HCT116 (cell line): ENCODE measurements at regions of chr20 and their contacts with region 1.

Region 1: GRCh38 chr20:24992487-24993205 is at the start of gene APMAP:
- DNase-seq: peak; percentile 77
- ATAC-seq: peak; percentile 91
- H3K4me3 ChIP-seq: peak within 1 kb of the TSS; percentile 89 to 94
- H3K27ac ChIP-seq: peak within 1 kb of the TSS; percentile 71
- H3K4me1 ChIP-seq: peaks cover 12 to 28% of the 10 kb centered on the region in 2 experiments
- H3K27me3 ChIP-seq: peaks cover 1% of the 10 kb centered on the region; the same call in 1 of the 2 replicates
- CTCF ChIP-seq: no peak
- POLR2A ChIP-seq: peak; percentile 86
- RAD21 ChIP-seq: no peak
- total RNA-seq, gene APMAP: 82.7 TPM

Region 2: DNA sequence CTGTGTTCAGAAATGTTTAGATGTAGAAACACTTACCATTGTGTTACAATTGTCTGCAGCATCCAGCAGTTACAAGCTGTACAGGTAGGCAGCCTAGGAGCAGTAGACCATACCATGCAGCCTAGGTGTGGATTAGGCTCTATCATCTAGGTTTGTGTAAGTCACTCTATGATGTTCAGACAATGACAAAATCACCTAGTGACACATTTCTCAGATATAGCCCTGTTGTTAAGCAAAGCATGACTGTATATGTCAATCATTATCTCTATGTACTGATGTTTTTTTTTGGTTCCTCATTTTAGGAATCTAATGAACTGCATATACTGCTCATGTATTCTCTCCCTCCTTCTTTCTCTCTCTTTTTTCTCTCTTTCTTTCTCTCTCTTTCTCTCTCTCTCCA is 1479.5 kb before region 1 on chr20:
- CTCF ChIA-PET with region 1: no interaction called
- POLR2A ChIA-PET with region 1: no interaction called
- RAD21 ChIA-PET with region 1: no interaction called
- intact Hi-C with region 1: no loop called
- DNase-seq: no peak
- ATAC-seq: no peak
- H3K4me3 ChIP-seq: no peak overlapping the region
- H3K27ac ChIP-seq: no peak overlapping the region
- H3K4me1 ChIP-seq: no peaks in the 10 kb centered on the region
- H3K27me3 ChIP-seq: no peaks in the 10 kb centered on the region
- CTCF ChIP-seq: no peak
- POLR2A ChIP-seq: no peak
- RAD21 ChIP-seq: no peak

Region 3: DNA sequence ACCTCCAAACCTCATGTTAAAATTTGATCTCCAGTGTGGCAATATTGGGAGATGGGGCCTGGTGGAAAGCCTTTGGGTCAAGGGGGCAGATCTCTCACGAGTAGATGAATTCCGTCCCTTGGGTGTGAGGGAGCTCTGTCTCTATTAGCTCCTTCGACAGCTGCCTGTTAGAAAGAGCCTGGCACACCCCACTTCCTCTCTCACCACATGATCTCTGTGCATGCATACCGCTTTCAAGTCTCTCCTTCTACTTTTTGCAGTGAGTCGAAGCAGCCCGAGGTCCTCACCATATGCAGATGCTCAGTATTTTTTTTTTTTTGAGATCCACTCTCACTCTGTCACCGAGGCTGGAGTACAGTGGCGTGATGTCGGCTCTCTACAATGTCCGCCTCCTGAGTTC is 346.3 kb before region 1 on chr20:
- CTCF ChIA-PET with region 1: no interaction called
- POLR2A ChIA-PET with region 1: no interaction called
- RAD21 ChIA-PET with region 1: no interaction called
- intact Hi-C with region 1: no loop called
- DNase-seq: no peak
- ATAC-seq: no peak
- H3K4me3 ChIP-seq: no peak overlapping the region
- H3K27ac ChIP-seq: no peak overlapping the region
- H3K4me1 ChIP-seq: peaks cover 0 to 5% of the 10 kb centered on the region in 2 experiments; a peak in 2 of 4 replicates
- H3K27me3 ChIP-seq: peaks cover 27% of the 10 kb centered on the region; the same call in 1 of the 2 replicates
- CTCF ChIP-seq: no peak
- POLR2A ChIP-seq: no peak
- RAD21 ChIP-seq: no peak

Region 4: GRCh38 chr20:25032478-25033280 is 40.0 kb after region 1 on chr20:
- CTCF ChIA-PET with region 1: no interaction called
- POLR2A ChIA-PET with region 1: no interaction called
- RAD21 ChIA-PET with region 1: no interaction called
- intact Hi-C with region 1: no loop called
- DNase-seq: no peak
- ATAC-seq: no peak
- H3K4me3 ChIP-seq: no peak overlapping the region
- H3K27ac ChIP-seq: no peak overlapping the region
- H3K4me1 ChIP-seq: no peaks in the 10 kb centered on the region
- H3K27me3 ChIP-seq: no peaks in the 10 kb centered on the region
- CTCF ChIP-seq: no peak
- POLR2A ChIP-seq: no peak
- RAD21 ChIP-seq: no peak

Region 5: GRCh38 chr20:25129908-25130307 is 137.3 kb after region 1 on chr20:
- CTCF ChIA-PET with region 1: no interaction called
- POLR2A ChIA-PET with region 1: no interaction called
- RAD21 ChIA-PET with region 1: no interaction called
- intact Hi-C with region 1: no loop called
- DNase-seq: no peak
- ATAC-seq: no peak; the same call in 1 of the 2 replicates
- H3K4me3 ChIP-seq: no peak overlapping the region
- H3K27ac ChIP-seq: no peak overlapping the region
- H3K4me1 ChIP-seq: no peaks in the 10 kb centered on the region
- H3K27me3 ChIP-seq: no peaks in the 10 kb centered on the region
- CTCF ChIP-seq: no peak
- POLR2A ChIP-seq: no peak
- RAD21 ChIP-seq: no peak

Region 6: GRCh38 chr20:25178563-25179438 is 186.2 kb after region 1 on chr20:
- CTCF ChIA-PET with region 1: interaction called, 4 read pairs
- POLR2A ChIA-PET with region 1: no interaction called
- RAD21 ChIA-PET with region 1: interaction called in 1 of 2 experiments, 3 read pairs
- intact Hi-C with region 1: loop called (anchors 1 kb)
- DNase-seq: peak; percentile 61
- ATAC-seq: peak; percentile 93
- H3K4me3 ChIP-seq: no peak overlapping the region
- H3K27ac ChIP-seq: peak overlapping the region; percentile 3; the same call in 1 of the 2 replicates
- H3K4me1 ChIP-seq: peaks cover 5 to 13% of the 10 kb centered on the region in 2 experiments; a peak in 3 of 4 replicates
- H3K27me3 ChIP-seq: no peaks in the 10 kb centered on the region
- CTCF ChIP-seq: peak; percentile 78 to 93 (median 93)
- POLR2A ChIP-seq: no peak
- RAD21 ChIP-seq: peak; percentile 95

Region 7: DNA sequence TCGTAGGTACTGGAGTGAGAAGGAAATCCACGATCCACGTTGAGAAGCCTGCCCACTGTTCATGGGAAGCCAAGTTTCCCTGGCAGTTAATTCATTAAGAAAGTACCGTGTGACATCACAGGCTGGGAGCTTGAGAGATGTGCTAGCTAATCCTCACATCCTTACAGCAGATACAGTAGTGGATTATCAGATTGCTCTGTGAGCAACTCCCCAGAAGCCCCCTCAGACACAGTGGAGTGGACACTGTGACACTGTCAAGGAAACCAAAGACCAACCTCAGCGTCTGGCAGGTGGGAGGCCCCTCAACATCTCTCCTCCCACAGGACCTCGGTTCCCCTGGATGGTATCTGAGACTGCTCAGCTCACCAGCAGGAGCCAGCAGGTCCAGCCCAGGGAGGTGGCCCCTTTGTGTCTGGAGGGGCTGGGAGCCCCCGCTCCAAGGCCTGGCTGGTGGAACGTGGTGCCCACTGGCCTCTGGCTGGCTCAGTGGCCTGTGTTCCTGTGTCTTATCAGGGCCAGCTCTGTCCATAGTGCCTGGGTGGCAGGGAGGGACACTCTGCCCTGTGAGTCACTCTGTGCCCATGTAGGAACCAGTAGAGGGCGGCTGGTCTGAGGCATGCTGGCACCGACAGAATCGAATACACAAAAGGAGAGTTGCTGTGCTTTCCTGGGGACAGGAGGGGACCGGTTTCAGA is 262.5 kb after region 1 on chr20:
- CTCF ChIA-PET with region 1: no interaction called
- POLR2A ChIA-PET with region 1: no interaction called
- RAD21 ChIA-PET with region 1: no interaction called
- intact Hi-C with region 1: loop called (anchors 2 kb)
- DNase-seq: no peak
- ATAC-seq: peak; percentile 66
- H3K4me3 ChIP-seq: no peak overlapping the region
- H3K27ac ChIP-seq: no peak overlapping the region
- H3K4me1 ChIP-seq: peaks cover 29 to 32% of the 10 kb centered on the region in 2 experiments
- H3K27me3 ChIP-seq: no peaks in the 10 kb centered on the region
- CTCF ChIP-seq: no peak
- POLR2A ChIP-seq: no peak
- RAD21 ChIP-seq: no peak

Region 8: DNA sequence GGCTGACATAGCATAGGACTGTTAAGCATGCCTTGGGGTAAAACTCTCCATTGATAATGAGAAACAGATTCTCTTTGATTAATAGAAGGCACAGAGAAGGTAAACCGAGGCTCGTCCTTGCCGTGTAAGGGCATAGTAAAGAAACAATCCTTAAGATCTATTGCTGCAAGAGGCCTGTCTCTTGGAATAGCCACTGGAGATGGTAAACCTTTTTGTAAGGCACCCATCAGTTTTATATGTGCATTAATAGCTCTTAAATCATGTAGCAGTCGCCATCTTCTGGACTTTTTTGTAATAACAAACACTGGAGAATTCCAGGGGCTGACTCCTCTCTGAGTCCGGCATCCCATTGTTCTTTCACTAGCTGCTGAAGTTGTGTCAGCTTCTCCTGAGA is 406.4 kb after region 1 on chr20:
- CTCF ChIA-PET with region 1: interaction called, 19 read pairs
- POLR2A ChIA-PET with region 1: interaction called, 3 read pairs
- RAD21 ChIA-PET with region 1: no interaction called
- intact Hi-C with region 1: loop called (anchors 2 kb)
- DNase-seq: peak; percentile 68
- ATAC-seq: peak; percentile 96
- H3K4me3 ChIP-seq: no peak overlapping the region
- H3K27ac ChIP-seq: no peak overlapping the region
- H3K4me1 ChIP-seq: 0 out of 4 replicates have a peak, but pooled peaks cover 0 to 2% of the 10 kb centered on the region in 2 experiments
- H3K27me3 ChIP-seq: no peaks in the 10 kb centered on the region
- CTCF ChIP-seq: peak; percentile 49 to 88 (median 67)
- POLR2A ChIP-seq: no peak
- RAD21 ChIP-seq: peak; percentile 84